Activated CD4-positive, alpha-beta memory T cell treated with anti-CD3 and anti-CD28 coated beads, Interleukin-2, amount 10 ng/mL, durations not matched to agents 7 days and 5 days (primary cell): ENCODE measurements at regions of chr6 and their contacts with region 1.

Region 1: DNA sequence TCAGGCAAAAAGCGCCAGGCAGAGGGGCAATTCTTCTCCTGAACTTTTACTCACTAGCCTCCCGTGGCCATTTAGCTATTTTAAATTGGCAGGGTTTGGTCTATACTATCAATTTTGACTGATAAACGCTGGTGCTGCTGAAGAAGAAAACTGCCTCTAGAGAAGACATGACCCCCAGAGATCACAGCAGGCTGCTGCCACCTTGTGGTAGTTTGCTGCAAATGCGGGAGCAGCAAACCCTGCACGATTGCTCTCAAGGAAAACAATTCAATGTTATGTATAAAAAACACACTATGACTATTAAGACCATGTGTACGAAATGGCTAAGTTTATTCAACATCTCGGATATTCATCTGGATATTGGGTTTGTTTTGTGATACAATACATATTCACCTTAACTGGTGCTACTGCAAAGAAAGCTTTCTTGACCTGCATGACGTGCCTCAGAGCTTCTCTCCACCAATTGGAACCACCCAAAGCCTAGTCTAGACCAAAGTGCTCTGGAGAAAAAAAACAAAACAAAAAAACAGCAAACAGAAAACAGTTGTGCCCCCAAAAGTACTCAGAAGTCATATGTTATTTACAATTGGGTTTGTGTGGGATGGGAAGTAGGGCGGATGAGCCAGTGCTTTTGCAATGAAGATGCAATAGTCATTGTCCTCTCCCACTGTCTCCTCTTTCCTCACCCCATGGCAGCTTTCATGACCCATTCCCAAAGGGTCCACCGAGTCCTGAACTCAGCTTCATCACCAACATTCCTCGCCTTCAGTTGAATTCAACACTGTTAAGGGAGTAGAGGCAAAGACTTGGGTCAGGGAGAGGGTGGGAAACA is 19.6 kb upstream of the IL17F start:
- DNase-seq: peak; percentile 77
- H3K4me3 Mint-ChIP-seq: no peak overlapping the region
- H3K27ac Mint-ChIP-seq: peak overlapping the region; percentile 47
- H3K4me1 Mint-ChIP-seq: peaks cover 8% of the 10 kb centered on the region
- H3K27me3 Mint-ChIP-seq: no peaks in the 10 kb centered on the region

Region 2: GRCh38 chr6:52020945-52021570 is 242.9 kb before region 1 on chr6:
- CTCF ChIA-PET with region 1: no interaction called
- POLR2A ChIA-PET with region 1: no interaction called
- DNase-seq: no peak
- H3K4me3 Mint-ChIP-seq: no peak overlapping the region
- H3K27ac Mint-ChIP-seq: no peak overlapping the region
- H3K4me1 Mint-ChIP-seq: no peaks in the 10 kb centered on the region
- H3K27me3 Mint-ChIP-seq: peaks cover 14% of the 10 kb centered on the region

Region 3: GRCh38 chr6:52162940-52163908 is 100.7 kb before region 1 on chr6:
- CTCF ChIA-PET with region 1: interaction called, 51 read pairs
- POLR2A ChIA-PET with region 1: interaction called, 8 read pairs
- DNase-seq: no peak
- H3K4me3 Mint-ChIP-seq: no peak overlapping the region
- H3K27ac Mint-ChIP-seq: no peak overlapping the region
- H3K4me1 Mint-ChIP-seq: peaks cover 19% of the 10 kb centered on the region
- H3K27me3 Mint-ChIP-seq: peaks cover 45% of the 10 kb centered on the region

Region 4: DNA sequence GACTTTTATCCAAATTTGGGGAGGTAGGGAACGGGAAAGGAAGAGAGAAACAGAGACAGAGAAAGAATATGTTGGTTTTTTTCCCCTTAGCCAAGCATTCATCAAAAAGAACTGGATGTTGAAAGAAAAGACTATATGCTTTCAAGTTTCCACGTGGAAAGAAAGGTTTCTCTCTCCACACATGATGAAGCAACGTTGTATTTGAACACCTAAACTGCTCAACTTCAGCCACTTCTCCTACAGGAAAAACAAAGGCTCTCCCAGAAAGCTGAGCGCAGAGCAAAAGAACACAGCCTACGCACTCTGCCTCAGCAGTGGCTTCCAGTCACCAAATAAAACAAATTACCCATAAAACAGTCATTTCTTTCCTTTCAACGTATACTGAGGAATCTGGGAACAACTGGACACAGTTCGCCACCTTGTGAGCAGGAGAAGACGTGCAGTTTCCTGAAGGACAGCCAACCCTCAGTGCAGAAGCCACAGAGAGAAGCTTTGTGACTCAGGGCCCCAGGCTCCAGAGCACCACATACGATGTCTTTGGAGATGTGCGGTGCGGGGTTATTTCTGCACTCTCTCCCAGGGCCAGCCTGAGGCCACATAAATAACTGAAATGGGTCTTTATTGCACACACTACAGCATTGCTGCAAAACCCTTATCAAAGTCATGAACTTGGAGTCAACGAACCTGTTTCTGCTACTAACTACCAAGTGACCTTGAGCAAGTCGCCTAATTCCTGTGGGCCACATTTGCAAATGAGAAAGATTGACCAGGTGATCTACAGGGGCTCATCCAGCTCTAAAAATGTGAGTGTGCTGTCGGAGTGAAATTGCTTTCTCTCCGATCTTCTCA is 29.7 kb before region 1 on chr6:
- CTCF ChIA-PET with region 1: interaction called, 18 read pairs
- POLR2A ChIA-PET with region 1: no interaction called
- DNase-seq: peak; percentile 42
- H3K4me3 Mint-ChIP-seq: no peak overlapping the region
- H3K27ac Mint-ChIP-seq: no peak overlapping the region
- H3K4me1 Mint-ChIP-seq: peaks cover 16% of the 10 kb centered on the region
- H3K27me3 Mint-ChIP-seq: peaks cover 66% of the 10 kb centered on the region

Region 5: DNA sequence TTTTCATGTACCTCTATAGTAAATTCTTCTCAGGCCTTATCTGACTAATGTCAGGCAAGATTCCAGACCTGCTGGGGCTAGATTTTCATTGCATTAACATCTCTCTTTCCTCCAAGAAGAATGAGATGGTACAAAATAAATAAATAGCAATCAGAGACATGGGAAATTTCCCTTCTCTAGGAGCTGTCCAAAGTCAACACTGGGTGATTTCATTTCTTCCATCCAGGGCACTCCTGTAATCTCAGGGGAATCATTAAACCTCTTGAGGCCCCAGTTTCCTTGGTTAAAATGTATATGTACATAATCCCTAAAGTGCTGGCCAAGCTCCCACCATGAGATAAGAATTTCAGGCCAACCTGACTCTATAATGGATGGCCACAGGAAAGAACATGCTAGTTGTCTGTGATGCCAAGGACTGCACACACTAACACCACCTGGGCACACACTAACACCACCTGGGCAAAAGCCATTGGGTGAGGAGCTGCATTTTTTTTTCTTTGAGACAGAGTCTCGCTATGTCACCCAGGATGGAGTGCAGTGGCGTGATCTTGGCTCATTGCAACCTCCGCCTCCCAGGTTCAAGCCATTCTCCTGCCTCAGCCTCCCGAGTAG is 20.5 kb before region 1 on chr6:
- CTCF ChIA-PET with region 1: interaction called, 10 read pairs
- POLR2A ChIA-PET with region 1: interaction called, 4 read pairs
- DNase-seq: no peak
- H3K4me3 Mint-ChIP-seq: no peak overlapping the region
- H3K27ac Mint-ChIP-seq: no peak overlapping the region
- H3K4me1 Mint-ChIP-seq: no peaks in the 10 kb centered on the region
- H3K27me3 Mint-ChIP-seq: peaks cover 42% of the 10 kb centered on the region